Psoas muscle (tissue), 8 donors: ENCODE measurements at regions of chr5 and their contacts with region 1.

Region 1: GRCh38 chr5:16776611-16777251 is 159.4 kb downstream of the MYO10 start:
- DNase-seq: peak; percentile 40 to 86
- ATAC-seq: peak; percentile 87 to 95 (median 90)
- H3K4me3 ChIP-seq: no peak overlapping the region
- H3K27ac ChIP-seq: peak overlapping the region; percentile 54
- H3K4me1 ChIP-seq: peaks cover 33% of the 10 kb centered on the region
- H3K27me3 ChIP-seq: no peaks in the 10 kb centered on the region
- CTCF ChIP-seq: peak; percentile 49

Region 2: DNA sequence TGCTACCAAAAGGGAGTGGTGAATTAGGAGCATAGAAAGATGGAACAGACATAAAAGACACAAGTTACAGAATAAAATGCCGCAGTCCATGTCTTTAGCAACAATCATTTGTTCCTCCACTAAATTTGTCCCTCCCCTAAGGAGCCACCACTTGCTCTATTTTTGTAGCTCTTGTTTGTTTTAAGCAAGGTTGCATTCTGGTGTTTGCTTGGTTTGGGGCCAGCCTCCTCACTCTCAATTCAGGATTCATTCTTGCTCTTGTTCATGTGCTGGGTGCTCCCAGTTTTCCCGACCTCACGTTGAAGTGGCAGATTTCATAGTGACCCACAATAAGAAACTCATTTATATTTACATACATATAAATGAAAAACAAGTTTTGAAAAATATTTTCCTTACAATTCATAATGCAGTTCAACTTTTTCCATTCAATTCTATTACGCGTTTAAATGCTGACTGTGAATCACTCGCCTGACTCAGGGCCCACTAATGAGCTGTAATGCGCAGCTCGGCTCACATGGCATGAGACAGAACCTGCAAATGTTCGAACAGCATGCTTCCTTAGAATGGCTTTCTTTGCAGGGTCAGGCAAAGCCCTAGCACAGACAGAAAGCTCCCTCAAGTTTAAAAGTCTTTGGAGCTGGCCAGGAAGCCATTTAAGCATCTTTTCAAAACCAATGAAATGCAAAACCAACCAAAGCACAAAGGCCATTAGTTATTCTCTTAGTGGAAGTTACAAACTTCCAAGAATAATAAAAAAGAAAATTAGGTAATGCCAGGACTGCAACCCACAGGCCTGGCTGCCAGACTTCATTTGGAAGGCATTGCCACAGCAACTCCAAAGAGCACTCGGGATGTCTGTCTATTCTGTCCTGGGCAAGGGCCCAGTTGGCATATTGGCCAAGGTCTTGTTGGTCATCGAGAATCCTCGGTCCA is 201.7 kb before region 1 on chr5:
- intact Hi-C with region 1: loop called in 1 of 2 experiments (anchors 10 kb)
- DNase-seq: peak; percentile 69 to 76
- ATAC-seq: peak; percentile 85 to 90 (median 87)
- H3K4me3 ChIP-seq: no peak overlapping the region
- H3K27ac ChIP-seq: peak overlapping the region; percentile 78
- H3K4me1 ChIP-seq: peaks cover 14% of the 10 kb centered on the region
- H3K27me3 ChIP-seq: no peaks in the 10 kb centered on the region
- CTCF ChIP-seq: no peak

Region 3: DNA sequence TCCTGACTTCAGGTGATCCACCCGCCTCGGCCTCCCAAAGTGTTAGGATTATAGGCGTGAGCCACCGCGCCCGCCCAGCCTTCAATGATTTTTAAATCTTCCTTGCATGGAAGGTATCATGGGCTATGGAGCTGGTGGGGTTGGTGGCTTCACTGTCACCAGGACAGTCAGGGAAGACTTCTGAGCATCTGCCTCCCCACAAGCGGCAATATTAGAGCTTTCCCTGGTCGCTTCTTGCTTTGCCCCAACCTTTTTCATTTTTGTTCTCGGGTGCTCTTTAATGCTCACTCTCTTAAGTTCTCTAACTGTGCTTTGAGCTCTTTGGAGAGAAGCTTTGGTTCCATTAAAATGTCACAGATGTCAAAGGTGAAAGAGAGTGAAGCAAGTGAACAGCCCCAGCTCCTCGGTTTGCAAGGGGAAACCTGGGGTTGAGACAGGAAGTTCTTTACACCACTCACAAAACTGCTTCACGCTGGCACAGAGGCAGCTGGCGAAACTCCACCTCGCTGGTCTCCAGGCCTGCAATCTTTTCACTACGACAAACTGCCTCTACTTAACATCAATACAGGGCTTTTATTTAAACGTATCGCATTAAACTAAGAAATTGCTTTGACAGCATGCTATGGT is 17.5 kb before region 1 on chr5:
- intact Hi-C with region 1: no loop called
- DNase-seq: no peak
- ATAC-seq: no peak
- H3K4me3 ChIP-seq: no peak overlapping the region
- H3K27ac ChIP-seq: no peak overlapping the region
- H3K4me1 ChIP-seq: no peaks in the 10 kb centered on the region
- H3K27me3 ChIP-seq: no peaks in the 10 kb centered on the region
- CTCF ChIP-seq: no peak